ENCODE measurements at regions of chr2 and their contacts with region 1.

Region 1: DNA sequence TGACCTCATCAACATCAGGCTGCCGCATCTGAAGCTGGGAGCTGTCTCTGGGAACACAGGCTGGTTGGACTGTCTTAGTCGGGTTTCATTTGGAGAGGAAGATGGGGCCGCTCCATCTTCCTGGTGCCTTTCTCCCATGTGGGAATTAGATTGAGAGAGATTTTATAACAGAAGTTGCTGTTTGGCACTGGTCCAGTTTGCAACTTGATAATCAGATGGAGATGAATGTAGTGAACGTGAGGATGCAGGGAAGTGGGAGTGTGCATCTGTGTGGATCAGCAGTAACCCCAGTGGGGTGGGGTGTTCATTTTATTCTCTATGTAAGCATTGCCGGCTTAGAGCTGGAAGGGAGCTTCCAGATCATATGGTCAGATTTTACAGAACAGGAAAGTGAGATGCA is 250.9 kb downstream of the DCDC2C start:
- DNase-seq: no peak
- ATAC-seq: no peak
- H3K4me3 ChIP-seq: no peak overlapping the region
- H3K27ac ChIP-seq: no peak overlapping the region
- H3K4me1 ChIP-seq: no peaks in the 10 kb centered on the region
- H3K27me3 ChIP-seq: peaks cover 0 to 29% of the 10 kb centered on the region in 2 experiments; a peak in 3 of 5 replicates
- CTCF ChIP-seq: no peak
- EP300 ChIP-seq: no peak
- POLR2A ChIP-seq: no peak
- RAD21 ChIP-seq: no peak

Region 2: GRCh38 chr2:3974765-3975164 is 20.5 kb after region 1 on chr2:
- CTCF ChIA-PET with region 1: no interaction called
- POLR2A ChIA-PET with region 1: no interaction called
- in situ Hi-C with region 1: no loop called
- intact Hi-C with region 1: loop called (anchors 1 kb)
- DNase-seq: no peak
- ATAC-seq: no peak
- H3K4me3 ChIP-seq: no peak overlapping the region
- H3K27ac ChIP-seq: no peak overlapping the region
- H3K4me1 ChIP-seq: no peaks in the 10 kb centered on the region
- H3K27me3 ChIP-seq: no peaks in the 10 kb centered on the region; a peak in 1 of 5 replicates
- CTCF ChIP-seq: no peak
- EP300 ChIP-seq: no peak
- POLR2A ChIP-seq: no peak
- RAD21 ChIP-seq: no peak

Region 3: DNA sequence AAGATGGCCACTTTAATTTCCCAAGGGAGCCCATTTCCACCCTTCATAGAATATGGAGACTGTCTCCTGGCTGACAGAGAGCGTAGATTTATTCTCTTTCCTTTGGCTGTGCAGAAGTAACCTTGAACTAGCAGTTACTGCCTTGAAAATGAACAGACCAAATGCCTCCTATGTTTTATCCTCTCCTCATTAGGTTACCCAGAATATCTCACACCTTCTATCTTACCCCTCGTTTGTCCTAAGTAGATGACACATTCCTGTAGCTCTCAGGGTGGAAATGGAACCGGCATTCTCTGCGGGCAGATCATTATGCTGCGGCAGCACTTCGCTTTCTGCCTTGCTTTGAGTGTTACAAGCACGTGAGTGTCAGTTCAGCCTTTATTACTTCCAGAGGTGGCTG is 85.6 kb after region 1 on chr2:
- CTCF ChIA-PET with region 1: no interaction called
- POLR2A ChIA-PET with region 1: no interaction called
- in situ Hi-C with region 1: no loop called
- intact Hi-C with region 1: no loop called
- DNase-seq: no peak
- ATAC-seq: no peak
- H3K4me3 ChIP-seq: no peak overlapping the region
- H3K27ac ChIP-seq: no peak overlapping the region
- H3K4me1 ChIP-seq: no peaks in the 10 kb centered on the region
- H3K27me3 ChIP-seq: peaks cover 0 to 4% of the 10 kb centered on the region in 2 experiments; a peak in 1 of 5 replicates
- CTCF ChIP-seq: no peak
- EP300 ChIP-seq: no peak
- POLR2A ChIP-seq: no peak
- RAD21 ChIP-seq: no peak

Measured in HepG2 (cell line).